PC-3 (cell line): ENCODE measurements at regions of chr17 and their contacts with region 1.

Region 1: DNA sequence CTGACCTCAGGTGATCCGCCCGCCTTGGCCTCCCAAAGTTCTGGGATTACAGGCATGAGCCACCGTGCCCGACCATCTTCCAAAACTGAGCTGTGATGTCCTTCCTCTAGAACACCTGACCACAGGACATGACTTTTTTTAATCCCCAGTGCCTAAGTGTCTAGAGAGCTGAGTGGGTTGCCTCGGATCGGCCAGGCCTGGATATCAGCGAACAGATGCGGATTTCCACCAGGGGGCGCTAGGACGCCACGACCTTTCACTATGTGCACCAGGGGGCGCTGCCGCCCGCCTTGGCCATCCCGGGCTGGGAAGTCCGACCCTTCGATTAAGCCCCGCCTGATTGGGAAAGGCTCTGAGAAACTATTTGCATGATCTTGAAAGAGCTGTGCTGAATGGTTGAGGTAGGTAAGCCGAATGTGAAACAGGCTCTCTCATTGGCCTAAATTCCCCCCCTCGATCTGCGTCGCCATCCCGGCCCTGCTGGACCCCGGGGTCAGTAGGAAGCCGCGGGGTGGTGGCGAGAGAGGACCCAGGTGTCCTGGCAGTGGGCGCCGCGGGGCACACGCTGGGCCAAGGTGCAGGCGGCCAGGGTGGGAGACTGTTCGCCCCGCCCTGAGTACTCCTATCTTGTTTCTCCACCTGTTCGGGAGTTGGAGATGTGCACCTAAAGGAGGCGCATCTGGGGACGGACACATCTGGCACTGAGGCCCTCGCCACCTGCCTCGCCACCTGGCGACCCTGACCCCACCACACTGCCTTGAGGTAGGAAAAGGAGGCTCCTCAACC is at the start of gene ACBD4:
- DNase-seq: peak; percentile 99
- ATAC-seq: peak; percentile 69
- H3K4me3 ChIP-seq: peak within 1 kb of the TSS; percentile 70
- H3K27ac ChIP-seq: no peak within 1 kb of the TSS
- H3K4me1 ChIP-seq: peaks cover 22% of the 10 kb centered on the region
- H3K27me3 ChIP-seq: no peaks in the 10 kb centered on the region
- CTCF ChIP-seq: peak; percentile 100
- total RNA-seq, gene ACBD4: 12.9 and 17.3 TPM in 2 replicates

Region 2: DNA sequence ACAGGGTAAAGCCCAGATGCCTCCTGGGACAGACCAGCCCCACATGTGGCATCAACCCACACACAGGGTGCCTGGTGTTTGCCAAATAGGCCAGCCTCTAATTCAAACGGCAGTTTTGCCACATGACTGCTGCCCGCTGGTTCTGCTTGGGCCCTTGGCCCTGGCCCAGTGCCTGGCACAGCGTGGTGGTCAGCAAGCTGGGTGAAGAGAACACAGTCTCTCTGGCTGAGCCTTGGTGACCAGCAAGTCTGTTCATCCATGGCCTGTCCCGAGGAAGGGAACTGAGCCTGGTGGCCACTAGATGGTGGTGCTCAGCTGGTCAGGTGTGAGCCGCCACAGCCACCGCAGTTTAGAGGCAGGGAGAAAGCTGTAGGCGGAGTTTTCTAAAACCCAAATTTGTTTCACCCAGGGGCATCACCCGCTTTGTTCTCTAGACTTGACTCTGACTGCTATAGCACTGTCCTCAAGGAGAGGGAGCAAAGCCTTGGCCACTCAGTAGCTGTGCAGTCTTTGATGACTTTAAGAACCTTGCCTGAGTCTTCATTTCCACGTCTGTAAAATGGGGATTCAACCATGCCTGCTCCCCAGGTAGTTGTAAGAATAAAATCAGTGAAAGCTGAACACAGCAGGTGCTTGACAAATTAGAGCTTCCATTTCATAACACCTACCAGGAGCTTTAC is 215.4 kb before region 1 on chr17:
- CTCF ChIA-PET with region 1: interaction called, 3 read pairs
- POLR2A ChIA-PET with region 1: interaction called, 4 read pairs
- intact Hi-C with region 1: loop called (anchors 5 kb)
- DNase-seq: peak; percentile 93
- ATAC-seq: peak; percentile 90
- H3K4me3 ChIP-seq: no peak overlapping the region
- H3K27ac ChIP-seq: no peak overlapping the region
- H3K4me1 ChIP-seq: peaks cover 24% of the 10 kb centered on the region
- H3K27me3 ChIP-seq: no peaks in the 10 kb centered on the region
- CTCF ChIP-seq: peak; percentile 98

Region 3: GRCh38 chr17:45060797-45061605 is 74.4 kb before region 1 on chr17 and contains the start of gene NMT1:
- CTCF ChIA-PET with region 1: interaction called, 8 read pairs
- POLR2A ChIA-PET with region 1: interaction called, 19 read pairs
- intact Hi-C with region 1: loop called (anchors 5 kb)
- DNase-seq: peak; percentile 100
- ATAC-seq: peak; percentile 90
- H3K4me3 ChIP-seq: peak within 1 kb of the TSS; percentile 82
- H3K27ac ChIP-seq: peak within 1 kb of the TSS; percentile 75
- H3K4me1 ChIP-seq: peaks cover 26% of the 10 kb centered on the region
- H3K27me3 ChIP-seq: no peaks in the 10 kb centered on the region
- CTCF ChIP-seq: no peak
- total RNA-seq, gene NMT1: 99.2 and 117 TPM in 2 replicates

Region 4: GRCh38 chr17:45148183-45149036 is 13.0 kb after region 1 on chr17 and contains the start of gene HEXIM1:
- CTCF ChIA-PET with region 1: interaction called, 153 read pairs
- POLR2A ChIA-PET with region 1: interaction called, 59 read pairs
- intact Hi-C with region 1: loop called (anchors 1 kb)
- DNase-seq: peak; percentile 100
- ATAC-seq: peak; percentile 72
- H3K4me3 ChIP-seq: peak within 1 kb of the TSS; percentile 91
- H3K27ac ChIP-seq: peak within 1 kb of the TSS; percentile 90
- H3K4me1 ChIP-seq: peaks cover 27% of the 10 kb centered on the region
- H3K27me3 ChIP-seq: no peaks in the 10 kb centered on the region
- CTCF ChIP-seq: no peak
- total RNA-seq, gene HEXIM1: 47.3 and 59.0 TPM in 2 replicates

Region 5: DNA sequence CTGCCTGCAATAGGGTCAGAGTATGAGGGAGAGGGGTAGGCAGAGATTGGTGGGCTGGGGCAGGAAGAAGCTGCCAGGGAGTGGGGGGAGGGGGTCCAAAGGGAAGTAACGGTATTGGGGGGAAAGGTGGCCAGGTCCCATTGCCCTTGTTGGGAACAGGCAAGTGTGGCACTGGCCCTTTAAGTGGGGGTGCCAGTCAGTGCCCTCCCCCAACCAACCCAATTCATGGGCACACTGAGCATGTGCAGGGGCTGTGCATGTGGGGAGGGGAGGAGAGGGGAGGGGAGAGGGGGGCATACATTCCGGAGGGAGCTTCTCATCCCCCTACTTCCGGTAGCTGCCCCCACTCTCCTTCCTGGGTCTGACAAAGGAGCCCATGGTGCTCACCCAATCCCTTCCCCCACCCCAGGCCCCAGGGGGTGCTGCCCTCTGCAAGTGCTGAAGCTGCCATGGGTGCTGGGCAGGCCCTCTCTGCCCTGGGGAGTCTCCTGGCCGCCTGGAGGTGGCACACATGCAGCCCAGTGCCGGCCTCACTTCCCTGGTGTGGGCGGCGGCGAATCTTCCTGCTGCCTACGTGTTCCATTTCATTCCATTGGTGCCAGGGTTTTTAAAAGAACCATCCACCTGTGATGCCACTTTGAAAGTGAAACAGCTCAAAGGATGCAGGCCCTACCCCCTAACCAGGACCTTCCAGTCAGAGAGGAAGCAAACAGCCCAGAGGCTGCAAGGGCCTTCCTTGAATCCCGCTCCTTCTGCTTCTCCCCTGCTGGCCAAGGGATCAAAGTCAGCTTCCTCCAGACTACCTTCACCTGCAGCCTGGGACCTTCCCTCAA is 37.3 kb after region 1 on chr17:
- CTCF ChIA-PET with region 1: interaction called, 38 read pairs
- POLR2A ChIA-PET with region 1: no interaction called
- intact Hi-C with region 1: no loop called
- DNase-seq: peak; percentile 97
- ATAC-seq: peak; percentile 63
- H3K4me3 ChIP-seq: peak overlapping the region; percentile 46; the same call in 1 of the 2 replicates
- H3K27ac ChIP-seq: peak overlapping the region; percentile 95
- H3K4me1 ChIP-seq: peaks cover 59% of the 10 kb centered on the region
- H3K27me3 ChIP-seq: no peaks in the 10 kb centered on the region
- CTCF ChIP-seq: peak; percentile 34; the same call in 1 of the 2 replicates

Region 6: GRCh38 chr17:45218895-45219661 is 83.7 kb after region 1 on chr17:
- CTCF ChIA-PET with region 1: interaction called, 14 read pairs
- POLR2A ChIA-PET with region 1: no interaction called
- intact Hi-C with region 1: no loop called
- DNase-seq: peak; percentile 92
- ATAC-seq: peak; percentile 76
- H3K4me3 ChIP-seq: no peak overlapping the region
- H3K27ac ChIP-seq: no peak overlapping the region
- H3K4me1 ChIP-seq: peaks cover 12% of the 10 kb centered on the region
- H3K27me3 ChIP-seq: no peaks in the 10 kb centered on the region
- CTCF ChIP-seq: peak; percentile 98